PC-9 (cell line): ENCODE measurements at regions of chr11 and their contacts with region 1.

Region 1: GRCh38 chr11:60097189-60097588 is 8.7 kb downstream of the MS4A2 start:
- DNase-seq: no peak
- H3K4me3 ChIP-seq: no peak overlapping the region
- H3K27ac ChIP-seq: no peak overlapping the region
- H3K4me1 ChIP-seq: no peaks in the 10 kb centered on the region
- H3K27me3 ChIP-seq: no peaks in the 10 kb centered on the region
- CTCF ChIP-seq: no peak

Region 2: DNA sequence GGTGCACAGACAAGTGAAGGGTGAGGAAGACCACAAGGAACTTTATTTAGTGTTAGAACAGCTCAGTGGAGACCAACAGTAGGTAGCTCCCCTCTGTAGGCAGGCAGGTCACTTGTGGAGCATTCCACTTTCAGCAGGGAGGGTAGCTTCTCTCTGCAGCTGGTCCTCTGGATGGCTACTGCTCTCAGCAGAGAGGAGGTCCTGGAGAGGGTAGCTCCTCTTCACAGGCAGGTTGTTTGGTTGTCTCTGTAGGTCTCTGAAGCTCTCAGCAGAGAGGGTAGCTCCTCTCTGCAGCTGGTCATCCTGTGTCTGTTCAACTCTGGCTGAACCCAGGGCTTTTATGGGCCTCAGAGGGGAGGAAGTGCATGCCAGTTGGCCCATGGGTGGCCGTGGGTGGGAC is 165.5 kb before region 1 on chr11:
- CTCF ChIA-PET with region 1: no interaction called
- POLR2A ChIA-PET with region 1: no interaction called
- intact Hi-C with region 1: no loop called
- DNase-seq: no peak
- H3K4me3 ChIP-seq: no peak overlapping the region
- H3K27ac ChIP-seq: no peak overlapping the region
- H3K4me1 ChIP-seq: no peaks in the 10 kb centered on the region
- H3K27me3 ChIP-seq: peaks cover 30% of the 10 kb centered on the region
- CTCF ChIP-seq: no peak

Region 3: DNA sequence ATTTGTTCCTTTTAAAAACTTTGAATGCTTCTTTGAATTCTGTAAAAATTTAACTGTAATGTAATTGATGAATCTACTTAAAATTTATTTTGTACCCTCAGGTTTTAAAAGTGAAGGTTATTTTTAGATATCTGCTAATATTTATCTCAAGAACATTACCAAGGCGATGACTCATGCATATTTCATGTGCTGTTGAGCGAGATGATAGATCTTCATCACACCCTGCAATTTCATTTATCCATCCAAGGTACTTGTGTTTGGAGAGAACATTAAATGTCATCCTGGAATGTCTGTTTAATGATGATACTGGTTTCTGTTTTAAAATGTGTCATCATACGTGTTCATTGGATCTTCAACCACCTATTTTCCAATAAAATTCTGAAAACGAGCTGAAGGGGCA is 140.1 kb before region 1 on chr11:
- CTCF ChIA-PET with region 1: no interaction called
- POLR2A ChIA-PET with region 1: interaction called, 17 read pairs
- intact Hi-C with region 1: no loop called
- DNase-seq: no peak
- H3K4me3 ChIP-seq: no peak overlapping the region
- H3K27ac ChIP-seq: no peak overlapping the region
- H3K4me1 ChIP-seq: no peaks in the 10 kb centered on the region
- H3K27me3 ChIP-seq: no peaks in the 10 kb centered on the region
- CTCF ChIP-seq: no peak